ENCODE measurements at regions of chr14 and their contacts with region 1.

Region 1: DNA sequence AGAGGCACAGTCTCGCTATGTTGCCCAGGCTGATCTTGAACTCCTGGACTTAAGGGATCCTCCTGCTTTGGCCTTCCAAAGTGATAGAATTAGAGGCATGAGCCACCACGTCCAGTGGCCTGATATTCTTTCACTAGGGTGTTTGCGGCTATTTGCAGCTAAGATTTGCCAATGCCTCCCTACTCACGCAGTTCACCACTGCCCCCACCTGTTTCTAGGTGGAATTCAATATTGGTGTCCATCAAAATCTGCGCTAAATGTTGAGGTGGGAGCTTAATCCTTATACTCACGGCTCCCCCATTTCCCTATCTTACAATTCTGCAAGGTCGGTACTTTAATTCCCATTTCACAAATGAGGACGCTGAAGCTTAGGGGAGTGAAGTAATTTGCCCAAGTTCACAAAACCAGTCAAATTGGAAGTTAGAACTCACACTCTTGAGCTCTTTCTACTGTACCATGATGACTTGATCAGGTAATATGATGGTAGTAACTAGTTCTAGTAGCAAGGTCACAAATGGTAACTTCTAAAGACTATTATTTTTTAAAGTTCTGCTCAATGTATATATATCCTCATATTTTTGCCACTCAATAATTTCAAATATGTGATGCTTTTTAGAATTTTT is 22.1 kb upstream of the LRRC9 start:
- DNase-seq: peak; percentile 29
- H3K4me3 ChIP-seq: no peak overlapping the region
- H3K27ac ChIP-seq: no peak overlapping the region
- H3K4me1 ChIP-seq: no peaks in the 10 kb centered on the region
- H3K27me3 ChIP-seq: peaks cover 0 to 3% of the 10 kb centered on the region in 2 experiments
- CTCF ChIP-seq: peak; percentile 37 to 39
- POLR2A ChIP-seq: no peak

Region 2: GRCh38 chr14:59576332-59577294 is 321.3 kb before region 1 on chr14 and contains the start of gene CCDC175:
- CTCF ChIA-PET with region 1: interaction called, 18 read pairs
- POLR2A ChIA-PET with region 1: no interaction called
- dilution Hi-C with region 1: no loop called
- intact Hi-C with region 1: no loop called
- DNase-seq: peak; percentile 63
- H3K4me3 ChIP-seq: peak within 1 kb of the TSS in 2 of 3 experiments; percentile 18 to 38
- H3K27ac ChIP-seq: no peak within 1 kb of the TSS
- H3K4me1 ChIP-seq: no peaks in the 10 kb centered on the region
- H3K27me3 ChIP-seq: peaks cover 0 to 13% of the 10 kb centered on the region in 2 experiments
- CTCF ChIP-seq: peak; percentile 81 to 84
- POLR2A ChIP-seq: no peak
- total RNA-seq, gene CCDC175: not detected in 2 replicates

Region 3: GRCh38 chr14:59638885-59639284 is 259.0 kb before region 1 on chr14:
- CTCF ChIA-PET with region 1: interaction called, 154 read pairs
- POLR2A ChIA-PET with region 1: no interaction called
- dilution Hi-C with region 1: no loop called
- intact Hi-C with region 1: no loop called
- DNase-seq: no peak
- H3K4me3 ChIP-seq: no peak overlapping the region
- H3K27ac ChIP-seq: no peak overlapping the region
- H3K4me1 ChIP-seq: no peaks in the 10 kb centered on the region
- H3K27me3 ChIP-seq: peaks cover 0 to 3% of the 10 kb centered on the region in 2 experiments
- CTCF ChIP-seq: no peak
- POLR2A ChIP-seq: no peak

Region 4: DNA sequence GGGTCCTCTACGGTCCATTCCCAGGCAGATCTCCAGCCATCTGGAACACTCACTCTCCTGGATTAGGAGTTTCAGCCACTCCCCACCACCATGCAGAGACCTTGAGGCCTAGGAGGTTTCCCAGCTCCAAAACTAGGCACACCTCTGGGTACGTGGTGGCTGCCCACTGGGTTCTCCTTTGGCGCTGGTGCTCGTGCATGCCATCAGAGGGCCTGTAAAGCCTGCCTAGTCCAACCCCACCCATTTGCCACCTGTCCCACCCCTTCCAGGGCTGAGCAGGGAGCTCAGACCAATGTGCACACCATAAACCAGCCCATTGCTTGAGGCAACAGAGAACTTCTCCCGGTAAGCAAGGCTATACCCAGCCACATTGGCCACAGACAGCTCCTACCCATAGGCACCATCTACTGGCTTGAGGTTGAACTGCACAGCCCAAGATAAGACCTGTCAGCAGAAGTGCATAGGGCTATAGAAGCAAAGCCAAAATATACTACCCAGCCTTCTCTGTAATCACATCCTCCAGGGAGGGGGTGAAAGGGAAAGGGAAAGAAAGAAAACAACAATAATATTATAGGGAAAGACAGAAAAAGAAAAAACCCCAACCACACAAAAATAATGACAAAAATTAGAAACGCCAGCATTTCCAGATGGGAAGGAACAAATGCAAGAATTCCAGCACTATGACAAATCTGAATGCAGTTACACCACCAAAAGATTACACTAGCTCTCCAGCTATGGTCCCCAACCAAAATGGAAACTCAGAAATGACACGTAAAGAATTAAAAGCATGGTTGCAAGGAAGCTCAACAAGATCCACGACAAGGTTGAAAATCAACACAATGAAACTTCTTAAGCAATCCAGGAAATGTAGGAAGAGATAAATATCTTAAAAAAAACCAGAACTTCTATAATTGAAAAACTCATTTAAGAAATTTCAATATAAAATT is 209.4 kb before region 1 on chr14:
- CTCF ChIA-PET with region 1: interaction called, 38 read pairs
- POLR2A ChIA-PET with region 1: no interaction called
- dilution Hi-C with region 1: no loop called
- intact Hi-C with region 1: no loop called
- DNase-seq: peak; percentile 44
- H3K4me3 ChIP-seq: no peak overlapping the region
- H3K27ac ChIP-seq: no peak overlapping the region
- H3K4me1 ChIP-seq: no peaks in the 10 kb centered on the region
- H3K27me3 ChIP-seq: no peaks in the 10 kb centered on the region
- CTCF ChIP-seq: peak; percentile 62 to 71
- POLR2A ChIP-seq: no peak

Region 5: GRCh38 chr14:59870277-59871165 is 27.4 kb before region 1 on chr14 and contains the start of gene RTN1:
- CTCF ChIA-PET with region 1: interaction called, 16 read pairs
- POLR2A ChIA-PET with region 1: no interaction called
- dilution Hi-C with region 1: no loop called
- intact Hi-C with region 1: no loop called
- DNase-seq: peak; percentile 44
- H3K4me3 ChIP-seq: peak within 1 kb of the TSS; percentile 11 to 40 (median 34)
- H3K27ac ChIP-seq: no peak within 1 kb of the TSS
- H3K4me1 ChIP-seq: no peaks in the 10 kb centered on the region
- H3K27me3 ChIP-seq: peaks cover 27 to 72% of the 10 kb centered on the region in 2 experiments
- CTCF ChIP-seq: no peak
- POLR2A ChIP-seq: no peak
- total RNA-seq, gene RTN1: 0.29 TPM in 1 of 2 replicates, not detected in the other

Region 6: DNA sequence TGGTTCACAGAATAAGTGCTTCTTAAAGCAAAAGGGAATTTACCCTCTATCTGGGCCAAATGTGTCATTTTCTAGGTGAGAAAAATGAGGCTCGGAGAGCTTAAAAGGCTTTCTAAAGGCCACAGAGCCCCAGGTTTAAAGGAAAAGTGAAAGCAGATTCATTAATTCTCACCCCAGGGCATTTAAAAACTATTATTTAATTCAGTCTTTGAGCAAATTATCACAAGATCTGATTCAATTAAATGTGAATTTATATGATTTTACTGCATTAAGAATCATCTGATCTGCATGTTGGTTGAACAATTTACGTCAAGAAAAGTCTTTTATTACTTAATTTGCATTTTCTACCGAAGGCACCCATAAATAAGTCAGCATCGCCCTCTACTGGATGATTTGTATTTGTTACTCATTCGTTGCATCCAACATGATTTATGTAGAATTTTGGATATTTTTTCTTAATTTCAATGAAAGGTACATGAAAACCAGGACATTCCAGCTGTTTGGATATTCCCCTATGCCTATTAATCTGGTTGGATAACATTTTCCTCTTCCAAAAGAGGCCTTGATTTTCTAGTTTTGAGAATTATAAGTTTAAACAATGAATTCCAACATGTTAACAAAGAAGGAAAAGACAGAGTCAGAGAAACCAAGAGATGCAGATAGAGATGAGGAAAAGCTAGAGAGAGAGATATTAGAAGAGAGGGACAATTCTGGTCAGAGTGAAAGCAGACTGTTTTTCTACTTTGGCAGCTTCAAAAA is 286.5 kb after region 1 on chr14:
- CTCF ChIA-PET with region 1: interaction called, 26 read pairs
- POLR2A ChIA-PET with region 1: no interaction called
- dilution Hi-C with region 1: no loop called
- intact Hi-C with region 1: loop called (anchors 5 kb)
- DNase-seq: peak; percentile 74
- H3K4me3 ChIP-seq: peak overlapping the region; percentile 15 to 67 (median 22)
- H3K27ac ChIP-seq: no peak overlapping the region
- H3K4me1 ChIP-seq: no peaks in the 10 kb centered on the region
- H3K27me3 ChIP-seq: peaks cover 0 to 8% of the 10 kb centered on the region in 2 experiments
- CTCF ChIP-seq: peak; percentile 34 to 45
- POLR2A ChIP-seq: no peak

Measured in endothelial cell of umbilical vein (primary cell).